ENCODE measurements at regions of chr17 and their contacts with region 1.

Region 1: GRCh38 chr17:32519228-32520103 is 32.7 kb downstream of the CDK5R1 start:
- DNase-seq: peak; percentile 48 to 85 (median 54)
- ATAC-seq: peak in 3 of 4 donors; percentile 55 to 75 (median 69)
- H3K4me3 ChIP-seq: peak overlapping the region; percentile 22 to 65 (median 56)
- H3K27ac ChIP-seq: peak overlapping the region in 6 of 12 donors; percentile 3 to 46 (median 33)
- H3K4me1 ChIP-seq: peaks cover 3 to 42% (median 22%) of the 10 kb centered on the region in 12 donors
- H3K27me3 ChIP-seq: peaks cover 0 to 4% (median 0%) of the 10 kb centered on the region in 9 donors
- CTCF ChIP-seq: no peak
- POLR2A ChIP-seq: no peak

Region 2: DNA sequence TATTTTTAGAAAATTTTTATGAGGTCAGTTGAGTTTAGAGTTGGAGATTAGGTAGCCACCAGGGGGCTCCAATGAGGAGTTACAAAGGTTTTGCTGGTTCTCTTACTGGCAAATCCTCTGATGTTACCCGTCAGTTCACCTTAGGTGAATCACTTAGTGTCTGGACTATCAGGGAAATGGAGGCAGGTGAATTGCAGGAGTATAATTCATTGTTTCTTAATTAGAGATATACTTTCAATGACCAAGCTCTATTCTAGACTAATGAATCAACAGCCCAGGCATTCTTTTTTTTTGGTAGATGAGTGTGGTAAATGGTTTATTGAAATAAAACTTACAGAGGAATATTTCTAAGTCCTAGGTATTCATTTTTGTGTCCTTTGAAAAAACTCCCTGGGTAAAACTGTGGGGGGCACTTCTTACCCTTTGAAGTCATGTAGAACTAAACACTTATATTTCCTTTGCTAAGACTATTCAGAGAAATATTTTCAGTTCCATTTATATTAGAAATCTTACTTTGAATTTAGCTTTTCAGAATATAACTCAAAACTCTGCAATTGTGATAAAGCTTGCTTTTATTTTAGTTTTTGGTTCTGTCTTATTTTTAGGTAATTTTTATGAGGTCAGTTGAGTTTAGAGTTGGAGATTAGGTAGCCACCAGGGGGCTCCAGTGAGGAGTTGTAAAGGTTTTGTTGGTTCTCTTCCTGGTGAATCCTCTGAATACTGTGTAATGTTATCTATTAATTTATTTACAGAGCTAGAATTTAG is 57.4 kb before region 1 on chr17:
- intact Hi-C with region 1: loop called in 1 of 10 experiments (anchors 10 kb)
- DNase-seq: peak in 2 of 5 donors; percentile 32 to 35
- ATAC-seq: peak in 2 of 4 donors; percentile 50 to 64
- H3K4me3 ChIP-seq: no peak overlapping the region
- H3K27ac ChIP-seq: no peak overlapping the region
- H3K4me1 ChIP-seq: peaks cover 0 to 13% (median 0%) of the 10 kb centered on the region in 12 donors
- H3K27me3 ChIP-seq: no peaks in the 10 kb centered on the region
- CTCF ChIP-seq: peak; percentile 41 to 67 (median 54)
- POLR2A ChIP-seq: no peak

Region 3: DNA sequence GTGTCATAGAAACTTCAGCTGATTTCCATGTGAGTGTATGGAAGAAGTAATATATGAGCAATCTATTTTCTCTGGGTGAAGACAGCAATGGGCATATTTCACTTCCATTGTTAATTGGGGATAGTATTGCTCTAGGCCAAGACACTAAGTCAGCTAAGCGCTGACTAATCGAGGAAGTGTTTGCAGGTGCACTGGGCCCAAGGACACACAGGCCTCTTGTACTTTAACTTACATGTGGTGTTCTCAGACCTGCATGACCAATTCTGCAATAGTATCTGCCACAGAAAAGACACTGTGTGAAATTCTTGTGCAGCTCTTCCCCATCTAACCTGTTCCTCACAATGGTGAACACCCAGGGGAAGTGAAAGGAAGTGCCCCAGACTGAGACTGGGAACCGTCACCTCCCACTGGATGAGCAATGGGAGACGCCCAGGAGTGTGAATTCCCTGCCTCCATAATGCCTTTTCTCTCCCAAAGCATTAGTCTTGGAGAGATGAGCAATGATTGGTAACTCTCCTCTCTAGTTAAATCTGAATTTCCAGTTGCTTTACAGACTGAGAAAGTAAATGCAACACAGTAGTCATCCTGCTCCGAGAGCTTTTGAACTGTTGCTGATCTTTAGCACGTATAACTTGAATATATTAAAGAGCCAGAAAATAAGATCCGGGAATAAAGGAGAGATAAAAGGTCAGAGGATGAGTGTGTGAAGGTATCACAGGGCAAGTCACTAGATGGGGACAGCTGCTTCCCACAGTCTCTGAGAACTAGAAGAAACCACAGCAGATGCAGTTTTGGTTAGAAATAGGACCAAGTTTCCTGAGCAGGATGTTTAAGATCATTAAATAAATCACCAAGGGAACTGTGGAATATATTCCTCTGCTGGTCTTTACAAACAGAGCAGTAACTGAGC is 50.0 kb after region 1 on chr17:
- intact Hi-C with region 1: loop called in 1 of 10 experiments (anchors 10 kb)
- DNase-seq: no peak
- ATAC-seq: no peak
- H3K4me3 ChIP-seq: no peak overlapping the region
- H3K27ac ChIP-seq: no peak overlapping the region
- H3K4me1 ChIP-seq: no peaks in the 10 kb centered on the region
- H3K27me3 ChIP-seq: no peaks in the 10 kb centered on the region
- CTCF ChIP-seq: no peak
- POLR2A ChIP-seq: no peak

Region 4: GRCh38 chr17:32659419-32659842 is 140.0 kb after region 1 on chr17:
- intact Hi-C with region 1: no loop called
- DNase-seq: peak; percentile 52 to 68 (median 63)
- ATAC-seq: peak; percentile 44 to 87 (median 83)
- H3K4me3 ChIP-seq: no peak overlapping the region
- H3K27ac ChIP-seq: no peak overlapping the region
- H3K4me1 ChIP-seq: peaks cover 0 to 21% (median 8%) of the 10 kb centered on the region in 12 donors
- H3K27me3 ChIP-seq: no peaks in the 10 kb centered on the region
- CTCF ChIP-seq: peak; percentile 78 to 94 (median 90)
- POLR2A ChIP-seq: no peak

Measured in heart left ventricle (tissue), 16 donors.